ENCODE measurements at regions of chr3 and their contacts with region 1.

Region 1: GRCh38 chr3:133448478-133449122 is 48.7 kb downstream of the BFSP2 start:
- DNase-seq: peak; percentile 40
- ATAC-seq: peak; percentile 88
- H3K4me3 Mint-ChIP-seq: peak overlapping the region; percentile 80
- H3K27ac Mint-ChIP-seq: peak overlapping the region; percentile 95
- H3K4me1 Mint-ChIP-seq: peaks cover 55% of the 10 kb centered on the region
- H3K27me3 Mint-ChIP-seq: peaks cover 6% of the 10 kb centered on the region
- CTCF ChIP-seq: no peak

Region 2: GRCh38 chr3:133464573-133464972 is 16.0 kb after region 1 on chr3:
- CTCF ChIA-PET with region 1: interaction called, 6 read pairs
- POLR2A ChIA-PET with region 1: interaction called, 33 read pairs
- intact Hi-C with region 1: loop called (anchors 1 kb)
- DNase-seq: no peak
- ATAC-seq: no peak
- H3K4me3 Mint-ChIP-seq: no peak overlapping the region
- H3K27ac Mint-ChIP-seq: no peak overlapping the region
- H3K4me1 Mint-ChIP-seq: peaks cover 60% of the 10 kb centered on the region
- H3K27me3 Mint-ChIP-seq: no peaks in the 10 kb centered on the region
- CTCF ChIP-seq: no peak

Region 3: DNA sequence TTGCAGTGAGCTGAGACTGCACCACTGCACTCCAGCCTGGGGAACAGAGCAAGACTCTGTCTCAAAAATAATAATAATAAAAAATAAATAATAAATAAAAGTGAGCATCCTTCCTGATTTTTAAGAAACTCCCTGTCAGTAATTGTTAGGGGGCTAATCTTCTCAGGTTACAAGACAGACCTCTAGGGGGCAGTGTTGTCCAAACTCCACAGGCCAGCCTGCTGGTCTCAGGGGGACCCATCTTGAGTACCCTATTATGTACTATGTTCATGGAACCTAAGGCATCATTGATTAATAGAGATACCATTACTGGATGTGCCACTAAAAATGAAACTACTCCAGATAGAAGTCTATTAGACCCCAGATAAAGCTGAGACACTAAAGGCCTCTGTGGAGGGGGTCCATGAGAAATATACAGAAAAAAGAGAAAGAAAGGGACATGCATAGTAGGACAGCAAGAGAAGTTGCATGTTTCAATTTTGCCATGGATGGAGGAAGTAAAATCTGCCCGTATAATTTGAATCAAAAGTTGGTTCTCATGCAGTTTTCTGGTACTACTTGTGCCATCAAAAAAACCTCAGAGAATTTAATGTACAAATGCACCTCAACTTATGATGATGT is 39.4 kb after region 1 on chr3:
- CTCF ChIA-PET with region 1: interaction called, 3 read pairs
- POLR2A ChIA-PET with region 1: interaction called, 7 read pairs
- intact Hi-C with region 1: loop called (anchors 1 kb)
- DNase-seq: no peak
- ATAC-seq: peak; percentile 20
- H3K4me3 Mint-ChIP-seq: no peak overlapping the region
- H3K27ac Mint-ChIP-seq: no peak overlapping the region
- H3K4me1 Mint-ChIP-seq: peaks cover 57% of the 10 kb centered on the region
- H3K27me3 Mint-ChIP-seq: no peaks in the 10 kb centered on the region
- CTCF ChIP-seq: no peak

Region 4: GRCh38 chr3:133506215-133506901 is 57.8 kb after region 1 on chr3:
- CTCF ChIA-PET with region 1: no interaction called
- POLR2A ChIA-PET with region 1: no interaction called
- intact Hi-C with region 1: loop called (anchors 1 kb)
- DNase-seq: no peak
- ATAC-seq: peak; percentile 97
- H3K4me3 Mint-ChIP-seq: peak overlapping the region; percentile 56
- H3K27ac Mint-ChIP-seq: peak overlapping the region; percentile 60
- H3K4me1 Mint-ChIP-seq: peaks cover 13% of the 10 kb centered on the region
- H3K27me3 Mint-ChIP-seq: no peaks in the 10 kb centered on the region
- CTCF ChIP-seq: no peak

Region 5: DNA sequence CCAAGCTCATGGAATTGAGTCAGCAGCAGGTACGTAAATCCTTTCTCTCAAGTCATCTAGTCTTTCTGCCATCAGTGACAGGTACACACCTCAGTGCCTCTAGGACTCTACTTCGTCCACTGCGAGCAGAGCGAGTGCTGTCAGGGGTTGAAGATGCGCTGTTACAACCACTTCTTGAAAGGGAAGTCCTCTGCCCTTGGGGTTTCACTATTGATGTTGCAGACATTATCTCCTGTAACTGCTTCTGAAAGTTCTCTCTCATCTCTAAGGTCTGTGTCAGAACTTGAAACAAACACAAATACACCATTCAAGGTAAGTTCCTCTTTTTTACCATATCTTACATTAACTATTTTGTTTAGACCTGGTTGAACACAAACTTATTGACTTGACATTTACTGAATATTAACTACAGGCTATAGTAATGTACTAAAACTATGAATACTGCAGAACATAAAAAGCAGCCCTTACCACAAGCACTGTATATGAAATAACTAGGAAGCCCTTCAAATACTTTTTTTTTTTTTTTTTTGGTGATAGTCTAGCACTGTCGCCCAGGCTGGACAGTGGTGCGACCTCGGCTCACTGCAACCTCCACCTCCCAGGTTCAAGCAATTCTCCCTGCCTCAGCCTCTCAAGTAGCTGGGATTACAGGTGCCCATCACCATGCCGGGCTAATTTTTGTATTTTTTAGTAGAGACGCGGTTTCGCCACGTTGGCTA is 171.6 kb after region 1 on chr3:
- CTCF ChIA-PET with region 1: no interaction called
- POLR2A ChIA-PET with region 1: no interaction called
- intact Hi-C with region 1: loop called (anchors 1 kb)
- DNase-seq: no peak
- ATAC-seq: peak; percentile 98
- H3K4me3 Mint-ChIP-seq: no peak overlapping the region
- H3K27ac Mint-ChIP-seq: peak overlapping the region; percentile 86
- H3K4me1 Mint-ChIP-seq: peaks cover 15% of the 10 kb centered on the region
- H3K27me3 Mint-ChIP-seq: no peaks in the 10 kb centered on the region
- CTCF ChIP-seq: no peak

Region 6: DNA sequence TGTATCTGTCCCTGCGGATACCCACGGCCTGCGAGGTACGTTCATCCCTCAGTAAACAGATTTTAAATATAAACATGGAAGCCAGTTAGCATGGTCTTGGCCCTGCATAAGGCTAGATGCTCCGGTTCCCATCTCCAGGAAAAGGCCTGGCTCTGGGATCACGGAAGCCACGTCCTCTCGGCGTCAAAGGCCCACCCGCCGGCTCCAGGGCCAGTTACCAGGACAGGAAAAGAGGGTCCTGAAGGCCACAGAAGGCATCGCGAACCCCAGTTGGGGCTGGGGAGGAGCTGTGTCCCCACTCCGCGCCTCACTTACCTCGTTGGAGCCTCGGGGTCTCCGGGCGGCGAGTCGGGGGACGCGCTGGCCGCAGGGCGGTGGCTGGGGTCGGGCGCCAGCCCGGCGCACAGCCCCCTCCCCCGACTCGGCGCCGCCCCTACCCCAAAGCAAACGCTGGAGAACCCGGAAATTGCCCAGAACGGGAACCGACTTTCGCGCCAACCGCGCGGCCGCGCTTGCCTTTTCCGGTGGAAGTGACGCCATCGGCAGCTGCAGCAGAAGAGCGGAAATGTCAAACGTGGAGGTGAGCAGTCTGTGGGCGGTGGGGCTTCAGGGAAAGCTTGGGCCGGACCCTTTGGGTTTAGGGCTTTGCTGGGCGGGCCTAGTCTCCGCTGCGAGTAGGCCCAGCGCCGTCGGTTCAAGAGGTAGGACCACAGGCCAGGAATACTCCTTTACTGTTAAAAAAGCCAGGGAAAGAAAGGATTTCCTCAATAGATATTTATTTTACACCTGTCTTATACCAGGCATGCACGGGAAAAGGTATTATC is 213.1 kb after region 1 on chr3 and contains the start of gene TOPBP1:
- CTCF ChIA-PET with region 1: no interaction called
- POLR2A ChIA-PET with region 1: interaction called, 6 read pairs
- intact Hi-C with region 1: loop called (anchors 2 kb)
- DNase-seq: peak; percentile 76
- ATAC-seq: peak; percentile 86
- H3K4me3 Mint-ChIP-seq: peak within 1 kb of the TSS; percentile 98
- H3K27ac Mint-ChIP-seq: peak within 1 kb of the TSS; percentile 95
- H3K4me1 Mint-ChIP-seq: peaks cover 34% of the 10 kb centered on the region
- H3K27me3 Mint-ChIP-seq: no peaks in the 10 kb centered on the region
- CTCF ChIP-seq: no peak
- total RNA-seq, gene TOPBP1: 45.8 and 49.9 TPM in 2 replicates